Upper lobe of right lung (tissue), 1 donor: ENCODE measurements at regions of chr5 and their contacts with region 1.

Region 1: DNA sequence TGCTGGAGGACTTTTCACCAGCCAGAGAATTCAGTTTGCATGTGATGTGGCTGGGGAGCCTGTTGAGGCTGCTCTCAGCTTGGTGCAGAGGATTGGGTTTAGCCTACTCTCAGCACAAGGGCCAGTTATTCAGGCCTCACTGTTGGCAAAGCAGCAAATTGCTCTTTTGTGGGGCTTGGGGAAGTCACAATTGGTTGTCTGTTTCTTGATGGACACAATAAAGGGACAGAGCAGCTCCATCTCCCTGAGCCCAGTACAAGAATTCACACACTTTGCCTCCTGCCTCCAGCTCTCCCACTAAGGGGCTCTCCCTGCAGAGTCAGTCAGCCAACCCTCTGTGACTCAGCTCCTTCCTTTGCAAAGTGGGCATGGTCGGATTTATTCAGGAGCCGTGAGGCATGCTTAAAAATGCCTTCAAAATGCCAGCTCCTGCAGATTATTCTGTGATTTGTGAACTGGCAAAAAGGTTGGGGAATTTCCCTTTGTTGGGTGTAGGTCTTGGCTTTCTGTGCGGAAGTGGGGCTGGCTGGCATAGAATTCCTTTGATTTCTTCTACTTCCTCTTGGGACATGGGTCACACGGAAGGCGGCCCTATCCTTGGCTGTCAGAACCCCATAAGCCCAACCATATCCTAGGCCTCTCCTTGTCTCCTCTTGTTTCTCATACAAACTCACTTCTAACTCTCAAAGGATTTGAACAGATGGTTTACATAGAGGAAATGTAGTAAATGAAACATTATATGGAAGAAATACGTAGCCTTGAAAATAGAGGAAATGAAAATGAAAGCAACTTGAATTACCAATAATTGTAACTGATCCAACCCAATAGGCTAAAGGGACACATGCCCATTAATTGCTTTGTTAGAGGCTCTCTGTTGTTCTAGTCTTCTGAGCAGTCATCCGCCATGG is 118.7 kb upstream of the CD180 start:
- DNase-seq: no peak
- ATAC-seq: peak; percentile 69
- H3K4me3 ChIP-seq: no peak overlapping the region
- H3K27ac ChIP-seq: peak overlapping the region; percentile 24
- H3K4me1 ChIP-seq: no peaks in the 10 kb centered on the region
- H3K27me3 ChIP-seq: no peaks in the 10 kb centered on the region
- CTCF ChIP-seq: no peak

Region 2: GRCh38 chr5:67289763-67290521 is 25.4 kb before region 1 on chr5:
- intact Hi-C with region 1: loop called (anchors 2 kb)
- DNase-seq: no peak
- ATAC-seq: no peak
- H3K4me3 ChIP-seq: no peak overlapping the region
- H3K27ac ChIP-seq: peak overlapping the region; percentile 52
- H3K4me1 ChIP-seq: peaks cover 15% of the 10 kb centered on the region
- H3K27me3 ChIP-seq: no peaks in the 10 kb centered on the region
- CTCF ChIP-seq: no peak

Region 3: DNA sequence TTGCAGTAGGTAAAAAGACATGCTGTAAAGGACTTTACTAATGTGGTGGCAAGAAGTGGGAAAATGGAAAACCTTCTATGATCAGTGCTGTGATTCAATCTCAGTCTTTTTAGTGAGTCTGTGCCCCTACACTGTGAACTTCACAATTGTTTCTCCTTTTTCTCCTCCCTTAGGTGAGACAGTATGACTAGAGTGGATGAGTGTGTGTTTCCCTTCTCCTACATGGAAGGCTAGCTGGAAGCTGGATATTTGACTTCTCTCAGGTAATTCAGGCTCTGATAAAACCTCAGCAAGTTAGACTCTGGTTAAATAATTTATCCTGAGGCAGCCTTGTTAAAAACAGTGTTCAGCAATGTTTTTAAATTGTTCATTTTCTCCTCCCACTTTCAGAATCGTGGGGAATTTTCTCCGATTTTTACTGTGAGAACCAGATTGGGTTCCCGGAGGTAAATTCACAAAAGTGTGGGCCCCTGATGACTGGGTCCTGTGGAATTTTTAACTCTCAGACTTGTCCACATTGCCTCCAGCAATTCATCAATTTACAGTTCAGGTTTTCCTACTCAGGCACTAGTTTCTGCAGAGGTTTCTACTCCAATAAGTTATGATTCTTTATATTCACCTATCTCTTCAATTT is 751.1 kb after region 1 on chr5:
- intact Hi-C with region 1: no loop called
- DNase-seq: no peak
- ATAC-seq: no peak
- H3K4me3 ChIP-seq: no peak overlapping the region
- H3K27ac ChIP-seq: peak overlapping the region; percentile 20
- H3K4me1 ChIP-seq: peaks cover 11% of the 10 kb centered on the region
- H3K27me3 ChIP-seq: no peaks in the 10 kb centered on the region
- CTCF ChIP-seq: no peak